ENCODE measurements at regions of chr6 and their contacts with region 1.

Region 1: GRCh38 chr6:56188429-56188828 is 59.0 kb downstream of the COL21A1 start:
- DNase-seq: no peak
- ATAC-seq: no peak

Region 2: DNA sequence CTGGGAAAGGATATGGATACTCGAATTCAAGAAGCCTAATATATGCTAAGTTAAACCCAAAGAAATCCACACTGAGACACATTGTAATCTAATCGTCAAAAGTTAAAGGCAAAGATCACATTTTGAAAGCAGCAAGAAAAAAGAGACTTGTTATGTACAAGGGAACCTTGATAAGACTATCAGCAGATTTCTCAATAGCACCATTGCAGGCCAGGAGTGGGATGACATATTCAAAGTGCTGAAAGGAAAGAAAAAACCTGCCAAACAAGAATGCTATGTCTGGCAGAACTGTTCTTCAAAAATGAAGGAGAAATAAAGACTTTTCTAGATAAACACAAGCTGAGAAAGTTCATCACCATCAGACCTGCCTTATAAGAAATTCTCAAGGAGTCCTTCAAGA is 16.3 kb before region 1 on chr6:
- intact Hi-C with region 1: no loop called
- DNase-seq: no peak
- ATAC-seq: no peak

Region 3: DNA sequence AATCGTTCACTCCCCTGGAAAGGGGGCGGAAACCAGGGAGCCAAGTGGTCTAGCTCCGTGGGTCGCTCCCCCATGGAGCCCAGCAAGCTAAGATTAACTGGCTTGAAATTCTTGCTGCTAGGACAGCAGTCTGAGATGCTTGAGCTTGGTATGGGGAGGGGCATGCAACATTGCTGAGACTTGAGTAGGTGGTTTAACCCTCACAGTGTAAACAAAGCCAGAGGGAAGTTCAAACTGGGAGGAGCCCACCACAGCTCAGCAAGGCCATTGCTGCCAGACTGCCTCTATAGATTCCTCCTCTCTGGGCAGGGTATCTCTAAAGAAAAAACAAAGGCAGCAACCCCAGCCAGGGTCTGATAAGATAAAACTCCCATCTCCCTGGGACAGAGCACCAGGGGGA is 15.7 kb after region 1 on chr6:
- intact Hi-C with region 1: loop called (anchors 2 kb)
- DNase-seq: no peak
- ATAC-seq: no peak

Region 4: DNA sequence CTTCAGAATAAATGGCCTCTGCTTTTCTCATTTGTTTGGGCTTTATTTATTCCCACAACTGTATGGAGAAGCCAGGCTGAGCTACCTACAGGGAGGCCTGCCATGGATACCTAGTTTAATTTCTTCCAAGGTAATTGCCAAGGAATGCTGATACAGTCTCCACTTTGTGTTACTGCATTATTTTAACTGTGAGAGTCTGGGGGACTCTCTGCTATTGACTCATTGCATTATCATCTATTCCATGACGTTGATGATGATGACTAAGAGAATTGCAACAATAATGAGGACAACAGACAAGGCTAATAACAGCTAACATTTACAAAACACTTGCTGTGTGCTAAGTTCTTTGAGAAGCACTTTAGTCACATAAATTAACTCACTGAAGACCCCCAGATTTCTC is 147.3 kb after region 1 on chr6:
- intact Hi-C with region 1: no loop called
- DNase-seq: no peak
- ATAC-seq: no peak